ENCODE measurements at regions of chr3 and their contacts with region 1.

Region 1: GRCh38 chr3:125261031-125261430 is 48.5 kb upstream of the SLC12A8 start:
- DNase-seq: no peak
- ATAC-seq: no peak
- H3K4me3 ChIP-seq: no peak overlapping the region
- H3K27ac ChIP-seq: no peak overlapping the region
- H3K4me1 ChIP-seq: no peaks in the 10 kb centered on the region
- H3K27me3 ChIP-seq: no peaks in the 10 kb centered on the region
- CTCF ChIP-seq: no peak

Region 2: DNA sequence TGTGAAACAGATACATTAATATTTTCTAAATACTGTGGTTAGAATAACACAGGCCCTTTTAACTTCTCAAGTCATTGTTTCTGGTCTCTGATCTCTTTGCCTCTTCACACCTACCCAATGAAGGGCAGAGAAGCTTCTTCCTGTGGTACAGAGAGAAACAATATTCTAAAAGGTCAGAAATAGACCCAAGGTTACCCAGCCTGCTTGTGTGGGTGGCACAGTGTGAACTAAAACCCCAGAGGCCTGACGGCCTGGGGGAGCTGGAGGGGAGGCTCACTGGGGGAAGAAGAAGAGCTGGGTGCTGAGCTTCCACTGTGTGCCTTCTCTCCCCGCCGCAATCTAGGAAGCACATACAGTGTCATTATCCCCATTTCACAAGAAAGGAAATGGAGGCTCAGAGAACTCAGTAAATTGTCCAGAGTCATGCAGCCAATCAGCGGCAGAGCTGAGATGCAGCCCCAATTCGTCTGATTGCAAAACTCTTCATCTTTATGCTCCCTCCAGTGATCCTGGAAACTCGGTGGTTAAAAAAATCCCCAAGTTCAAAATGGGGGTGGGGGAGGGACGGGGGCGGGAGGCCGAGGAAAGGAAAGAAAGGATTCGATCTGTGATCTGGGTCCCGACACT is 141.2 kb before region 1 on chr3:
- intact Hi-C with region 1: no loop called
- DNase-seq: no peak
- ATAC-seq: peak in 1 of 4 donors; percentile 30
- H3K4me3 ChIP-seq: peak overlapping the region; percentile 22
- H3K27ac ChIP-seq: no peak overlapping the region
- H3K4me1 ChIP-seq: peaks cover 22% of the 10 kb centered on the region
- H3K27me3 ChIP-seq: peaks cover 0 to 3% (median 0%) of the 10 kb centered on the region in 3 donors
- CTCF ChIP-seq: no peak

Region 3: DNA sequence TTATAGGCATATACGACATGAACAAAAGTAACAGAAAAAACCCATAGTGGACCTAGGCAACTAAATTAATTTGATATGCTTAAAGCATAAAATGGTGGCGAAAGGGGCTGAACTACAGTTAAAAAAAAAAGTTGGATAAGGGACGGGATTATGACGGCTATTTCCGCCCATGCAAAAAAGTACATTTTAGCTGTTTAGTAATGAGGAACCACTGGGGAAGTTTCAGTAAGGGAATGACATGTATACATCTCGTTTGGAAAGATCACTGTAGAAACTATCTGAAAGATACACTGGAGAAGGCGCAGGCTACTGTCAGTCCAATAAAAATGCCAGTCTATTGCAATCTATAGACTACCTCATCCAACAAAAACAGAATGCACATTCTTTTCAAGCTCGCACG is 48.4 kb after region 1 on chr3:
- intact Hi-C with region 1: loop called in 1 of 2 experiments (anchors 5 kb)
- DNase-seq: no peak
- ATAC-seq: no peak
- H3K4me3 ChIP-seq: no peak overlapping the region
- H3K27ac ChIP-seq: no peak overlapping the region
- H3K4me1 ChIP-seq: no peaks in the 10 kb centered on the region
- H3K27me3 ChIP-seq: no peaks in the 10 kb centered on the region
- CTCF ChIP-seq: no peak

Region 4: GRCh38 chr3:125351814-125352456 is 90.9 kb after region 1 on chr3:
- intact Hi-C with region 1: no loop called
- DNase-seq: no peak
- ATAC-seq: no peak
- H3K4me3 ChIP-seq: no peak overlapping the region
- H3K27ac ChIP-seq: no peak overlapping the region
- H3K4me1 ChIP-seq: peaks cover 51% of the 10 kb centered on the region
- H3K27me3 ChIP-seq: no peaks in the 10 kb centered on the region
- CTCF ChIP-seq: no peak

Region 5: GRCh38 chr3:125374996-125375941 is 114.2 kb after region 1 on chr3 and contains the start of gene ZNF148:
- intact Hi-C with region 1: no loop called
- DNase-seq: peak; percentile 92 to 95
- ATAC-seq: peak; percentile 99 to 100 (median 99)
- H3K4me3 ChIP-seq: peak within 1 kb of the TSS; percentile 88
- H3K27ac ChIP-seq: peak within 1 kb of the TSS; percentile 95
- H3K4me1 ChIP-seq: peaks cover 20% of the 10 kb centered on the region
- H3K27me3 ChIP-seq: no peaks in the 10 kb centered on the region
- CTCF ChIP-seq: no peak
- total RNA-seq, gene ZNF148: 22.7 to 29.8 (median 27.8) TPM

Region 6: GRCh38 chr3:125386811-125387210 is 125.8 kb after region 1 on chr3:
- intact Hi-C with region 1: no loop called
- DNase-seq: no peak
- ATAC-seq: no peak
- H3K4me3 ChIP-seq: no peak overlapping the region
- H3K27ac ChIP-seq: no peak overlapping the region
- H3K4me1 ChIP-seq: no peaks in the 10 kb centered on the region
- H3K27me3 ChIP-seq: peaks cover 0 to 3% (median 0%) of the 10 kb centered on the region in 3 donors
- CTCF ChIP-seq: no peak